ACHN (cell line): ENCODE measurements at regions of chr1 and their contacts with region 1.

Region 1: GRCh38 chr1:46197964-46198811 is at the start of gene POMGNT1:
- DNase-seq: peak; percentile 67

Region 2: DNA sequence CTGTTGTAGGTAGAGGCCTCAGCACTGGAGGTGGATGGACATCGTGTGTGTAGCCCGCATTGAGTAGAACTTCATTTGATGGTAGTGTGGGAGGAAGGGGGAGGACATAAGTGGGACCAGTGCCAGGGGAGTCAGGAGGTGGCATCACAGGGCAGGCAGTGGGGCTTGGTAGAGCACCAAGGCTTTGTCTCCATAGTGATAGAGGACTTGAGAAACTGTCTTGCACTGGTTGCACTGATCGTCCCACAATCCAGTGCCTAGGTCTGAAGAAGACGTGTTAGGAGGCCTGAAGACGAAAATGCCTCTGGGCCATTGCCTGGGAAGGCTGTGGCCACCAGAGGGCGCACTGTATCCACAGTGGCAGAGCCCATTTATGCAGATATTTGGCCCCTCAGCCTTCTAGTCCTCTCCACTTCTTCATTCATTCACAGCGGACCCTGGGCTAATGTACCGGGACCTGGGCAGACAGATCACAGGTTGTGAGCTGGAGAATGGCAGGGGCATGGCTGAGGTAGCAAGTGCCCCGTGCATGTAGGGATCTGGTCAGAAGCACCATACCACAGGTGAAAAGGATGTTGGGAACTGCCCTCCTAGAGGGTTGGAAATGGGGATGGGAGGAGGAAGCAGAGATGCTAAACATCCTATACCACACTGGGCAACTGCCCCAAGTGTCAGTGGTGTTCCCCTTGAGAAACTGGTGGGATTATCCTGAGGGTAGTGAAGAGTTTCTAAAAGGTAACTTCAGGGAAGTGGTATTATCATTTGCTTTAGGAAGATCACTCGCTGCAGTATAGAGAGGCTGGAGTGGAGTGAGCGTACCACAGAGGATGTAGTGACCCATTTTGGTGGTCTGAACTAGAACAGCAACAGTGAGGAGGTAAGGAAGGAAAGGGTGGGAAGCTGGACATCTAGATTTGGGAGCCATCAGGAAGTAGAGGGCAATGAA is 161.0 kb before region 1 on chr1:
- in situ Hi-C with region 1: loop called (anchors 25 kb)
- DNase-seq: peak; percentile 71

Region 3: DNA sequence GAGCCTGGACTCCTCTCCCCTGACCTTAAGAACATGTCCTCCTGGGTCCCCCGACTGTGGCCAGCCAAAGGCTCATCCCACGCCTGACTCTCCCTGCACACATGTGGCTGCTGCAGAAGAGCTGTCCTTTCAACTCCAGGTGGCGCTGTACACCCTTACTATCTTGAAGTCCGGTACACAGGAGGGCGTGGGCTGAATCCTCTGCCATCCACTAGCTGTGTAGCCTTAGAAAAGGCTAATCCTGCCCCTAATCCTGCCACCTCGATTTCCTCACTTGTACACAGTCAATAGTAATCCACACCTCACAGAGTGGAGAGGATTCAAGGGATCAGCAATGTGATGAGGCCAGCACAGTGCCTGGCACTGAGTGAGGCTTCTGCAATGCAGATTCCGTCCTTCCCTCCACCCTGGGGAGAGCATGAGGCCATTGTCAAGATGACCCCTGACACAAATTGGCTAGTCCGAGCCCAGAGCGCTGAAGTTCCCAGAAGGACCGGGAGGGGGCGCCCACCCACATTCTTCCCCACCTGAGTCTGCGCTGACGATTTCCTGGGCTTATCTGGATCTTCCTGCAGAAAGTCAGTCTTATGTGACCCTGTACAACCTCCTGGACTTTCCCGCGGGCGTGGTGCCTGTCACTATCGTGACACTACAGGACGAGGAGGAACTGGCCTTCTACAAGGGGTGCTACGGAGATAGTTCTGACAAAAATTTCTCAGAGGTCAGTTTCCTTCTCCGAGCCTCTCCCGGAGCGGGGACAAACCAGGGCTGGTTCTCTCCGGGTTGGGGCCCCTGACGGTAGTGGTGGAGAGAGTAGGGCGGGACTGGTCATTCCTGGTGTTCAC is 244.4 kb after region 1 on chr1:
- in situ Hi-C with region 1: no loop called
- DNase-seq: peak; percentile 91